ENCODE measurements at regions of chr6 and their contacts with region 1.

Region 1: DNA sequence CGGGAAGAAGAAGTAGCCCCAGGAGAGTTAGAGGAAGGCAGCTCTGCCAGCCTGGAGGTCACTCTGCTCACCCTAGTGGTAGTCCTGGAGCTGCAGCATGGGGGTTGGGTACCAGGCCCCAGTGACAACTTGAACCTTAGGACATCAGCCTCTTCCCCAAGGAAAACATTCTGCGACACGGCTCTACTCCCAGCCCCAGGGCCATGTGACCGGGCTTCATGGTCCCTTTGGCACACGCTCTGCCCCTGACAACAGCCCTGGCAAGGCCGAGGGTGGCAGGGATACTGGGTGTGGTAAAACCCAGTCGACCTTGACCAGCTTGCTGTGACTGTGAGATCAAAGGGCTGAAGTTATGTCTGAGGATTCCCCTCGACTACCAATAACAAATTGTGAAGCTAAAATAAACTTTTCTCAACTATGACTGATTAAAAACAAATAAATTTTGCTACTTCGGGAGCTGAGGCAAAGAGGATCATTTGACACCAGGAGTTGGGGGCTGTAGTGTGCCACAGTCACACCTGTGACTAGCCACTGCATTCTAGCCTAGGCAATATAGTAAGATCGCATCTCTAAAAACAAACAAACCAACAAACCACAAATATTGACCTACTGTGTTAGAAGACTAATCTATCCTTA is 24.4 kb upstream of the ARID1B start:
- DNase-seq: peak; percentile 32
- ATAC-seq: peak; percentile 97
- H3K4me3 Mint-ChIP-seq: peak overlapping the region; percentile 25
- H3K27ac Mint-ChIP-seq: peak overlapping the region; percentile 72
- H3K4me1 Mint-ChIP-seq: peaks cover 48% of the 10 kb centered on the region
- H3K27me3 Mint-ChIP-seq: no peaks in the 10 kb centered on the region
- CTCF ChIP-seq: no peak

Region 2: DNA sequence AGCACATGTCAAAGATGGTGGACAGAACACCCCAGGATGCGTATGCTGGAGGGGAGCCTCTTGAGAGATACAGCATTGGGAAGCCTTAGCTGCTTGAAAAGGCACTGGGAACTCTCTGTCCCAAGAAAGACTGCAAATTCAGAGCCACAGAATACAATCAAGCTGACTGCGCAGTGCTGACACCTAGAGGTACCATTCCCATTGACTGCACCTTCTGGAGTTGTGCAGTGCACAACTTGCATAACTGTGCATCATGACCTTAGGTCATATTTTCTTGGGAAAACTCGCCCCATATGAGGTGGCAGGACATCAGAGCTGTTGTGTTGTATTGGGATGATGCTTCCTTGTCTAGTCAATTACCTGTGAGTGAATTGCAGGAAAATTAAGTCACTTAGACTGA is 650.7 kb before region 1 on chr6:
- CTCF ChIA-PET with region 1: no interaction called
- POLR2A ChIA-PET with region 1: no interaction called
- intact Hi-C with region 1: no loop called
- DNase-seq: no peak
- ATAC-seq: no peak
- H3K4me3 Mint-ChIP-seq: no peak overlapping the region
- H3K27ac Mint-ChIP-seq: no peak overlapping the region
- H3K4me1 Mint-ChIP-seq: no peaks in the 10 kb centered on the region
- H3K27me3 Mint-ChIP-seq: no peaks in the 10 kb centered on the region
- CTCF ChIP-seq: no peak

Region 3: GRCh38 chr6:156564127-156564806 is 188.5 kb before region 1 on chr6:
- CTCF ChIA-PET with region 1: interaction called, 5 read pairs
- POLR2A ChIA-PET with region 1: no interaction called
- intact Hi-C with region 1: loop called (anchors 1 kb)
- DNase-seq: peak; percentile 78
- ATAC-seq: peak; percentile 100
- H3K4me3 Mint-ChIP-seq: no peak overlapping the region
- H3K27ac Mint-ChIP-seq: no peak overlapping the region
- H3K4me1 Mint-ChIP-seq: peaks cover 10% of the 10 kb centered on the region
- H3K27me3 Mint-ChIP-seq: peaks cover 5% of the 10 kb centered on the region
- CTCF ChIP-seq: peak; percentile 76

Region 4: GRCh38 chr6:156699017-156699421 is 53.8 kb before region 1 on chr6:
- CTCF ChIA-PET with region 1: no interaction called
- POLR2A ChIA-PET with region 1: interaction called, 17 read pairs
- intact Hi-C with region 1: no loop called
- DNase-seq: no peak
- ATAC-seq: peak; percentile 45
- H3K4me3 Mint-ChIP-seq: peak overlapping the region; percentile 74
- H3K27ac Mint-ChIP-seq: peak overlapping the region; percentile 92
- H3K4me1 Mint-ChIP-seq: peaks cover 79% of the 10 kb centered on the region
- H3K27me3 Mint-ChIP-seq: no peaks in the 10 kb centered on the region
- CTCF ChIP-seq: no peak

Region 5: GRCh38 chr6:156719720-156720563 is 32.8 kb before region 1 on chr6:
- CTCF ChIA-PET with region 1: interaction called, 5 read pairs
- POLR2A ChIA-PET with region 1: interaction called, 28 read pairs
- intact Hi-C with region 1: no loop called
- DNase-seq: peak; percentile 78
- ATAC-seq: peak; percentile 81
- H3K4me3 Mint-ChIP-seq: peak overlapping the region; percentile 82
- H3K27ac Mint-ChIP-seq: peak overlapping the region; percentile 95
- H3K4me1 Mint-ChIP-seq: peaks cover 52% of the 10 kb centered on the region
- H3K27me3 Mint-ChIP-seq: no peaks in the 10 kb centered on the region
- CTCF ChIP-seq: no peak

Region 6: DNA sequence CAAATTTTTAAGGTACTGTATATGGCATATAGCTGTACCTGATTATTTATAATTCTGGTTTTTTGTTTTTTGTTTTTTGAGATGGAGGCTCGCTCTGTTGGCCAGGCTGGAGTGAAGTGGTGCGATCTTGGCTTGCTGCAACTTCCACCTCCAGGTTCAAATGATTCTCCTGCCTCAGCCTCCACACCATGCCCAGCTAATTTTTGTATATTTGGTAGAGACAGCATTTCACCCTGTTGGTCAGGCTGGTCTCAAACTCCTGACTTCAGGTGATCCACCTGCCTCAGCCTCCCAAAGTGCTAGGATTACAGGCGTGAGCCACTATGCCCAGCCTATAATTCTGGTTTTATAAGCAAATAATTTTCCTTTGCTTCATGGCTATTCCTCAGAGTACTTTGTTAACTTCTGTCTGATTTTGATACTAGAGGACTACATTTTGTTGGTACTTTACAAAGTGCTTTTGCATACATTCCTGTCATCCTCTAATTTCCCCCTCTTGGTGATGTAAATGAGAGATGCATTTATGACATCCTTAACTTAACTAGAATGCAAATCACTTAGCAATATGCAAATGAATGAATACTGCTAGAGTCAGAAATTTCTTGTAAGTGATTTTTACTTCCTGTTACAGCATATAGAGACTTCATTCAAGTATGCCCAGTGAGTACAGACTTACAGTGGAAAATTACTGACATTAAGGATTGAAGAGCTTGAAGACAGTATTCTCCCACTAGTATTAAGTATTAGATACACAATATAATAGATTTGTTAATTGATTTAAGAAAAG is 11.3 kb before region 1 on chr6:
- CTCF ChIA-PET with region 1: no interaction called
- POLR2A ChIA-PET with region 1: interaction called, 11 read pairs
- intact Hi-C with region 1: loop called (anchors 1 kb)
- DNase-seq: no peak
- ATAC-seq: peak; percentile 86
- H3K4me3 Mint-ChIP-seq: peak overlapping the region; percentile 24
- H3K27ac Mint-ChIP-seq: peak overlapping the region; percentile 77
- H3K4me1 Mint-ChIP-seq: peaks cover 11% of the 10 kb centered on the region
- H3K27me3 Mint-ChIP-seq: no peaks in the 10 kb centered on the region
- CTCF ChIP-seq: no peak

Region 7: GRCh38 chr6:156767603-156768467 is 15.1 kb after region 1 on chr6:
- CTCF ChIA-PET with region 1: interaction called, 3 read pairs
- POLR2A ChIA-PET with region 1: interaction called, 14 read pairs
- intact Hi-C with region 1: loop called (anchors 1 kb)
- DNase-seq: no peak
- ATAC-seq: peak; percentile 91
- H3K4me3 Mint-ChIP-seq: peak overlapping the region; percentile 30
- H3K27ac Mint-ChIP-seq: peak overlapping the region; percentile 84
- H3K4me1 Mint-ChIP-seq: peaks cover 28% of the 10 kb centered on the region
- H3K27me3 Mint-ChIP-seq: no peaks in the 10 kb centered on the region
- CTCF ChIP-seq: no peak